PC-9 (cell line): ENCODE measurements at regions of chr1 and their contacts with region 1.

Region 1: GRCh38 chr1:32939655-32940371 is 24.8 kb downstream of the RNF19B start:
- DNase-seq: peak in 1 of 2 experiments; percentile 79
- H3K4me3 ChIP-seq: no peak overlapping the region
- H3K27ac ChIP-seq: no peak overlapping the region
- H3K4me1 ChIP-seq: peaks cover 17% of the 10 kb centered on the region
- H3K27me3 ChIP-seq: no peaks in the 10 kb centered on the region
- CTCF ChIP-seq: no peak

Region 2: DNA sequence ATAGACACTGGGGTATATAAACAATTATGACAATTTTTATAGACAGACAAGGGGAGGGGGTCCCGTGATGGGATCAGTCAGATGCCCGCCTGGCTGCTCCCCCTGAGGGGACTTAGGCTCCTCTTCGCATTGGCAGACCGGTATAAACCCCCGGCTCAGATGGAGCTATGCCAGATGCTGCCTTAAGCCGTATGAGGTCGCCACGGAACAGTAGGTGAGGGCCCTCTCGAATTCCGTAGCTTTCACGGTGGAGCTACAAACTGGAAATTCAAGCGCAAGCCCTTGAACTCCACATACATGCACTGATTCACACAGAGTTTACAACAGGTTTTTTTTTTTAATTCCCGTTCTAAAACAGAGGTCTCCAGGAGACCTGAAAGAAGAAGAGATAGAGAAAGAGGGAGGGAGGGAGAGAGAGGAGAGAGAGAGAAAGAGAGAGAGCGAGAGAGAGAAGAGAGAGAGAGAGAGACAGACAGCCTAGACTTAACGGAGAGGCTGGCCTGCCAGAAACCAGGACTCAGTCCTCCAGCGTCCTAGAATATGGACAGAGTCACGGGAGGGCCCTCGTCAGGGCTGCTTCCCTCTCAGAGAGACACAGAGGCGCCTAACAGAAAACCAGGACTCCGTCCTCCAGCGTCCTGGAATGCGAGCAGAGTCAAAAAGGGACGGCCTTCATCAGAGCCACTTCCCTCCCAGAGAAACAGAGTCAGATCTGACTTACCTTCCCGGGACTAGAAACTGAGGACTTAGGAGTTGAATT is 14.2 kb before region 1 on chr1:
- CTCF ChIA-PET with region 1: no interaction called
- POLR2A ChIA-PET with region 1: interaction called, 19 read pairs
- intact Hi-C with region 1: no loop called
- DNase-seq: no peak
- H3K4me3 ChIP-seq: no peak overlapping the region
- H3K27ac ChIP-seq: no peak overlapping the region
- H3K4me1 ChIP-seq: peaks cover 8% of the 10 kb centered on the region; the same call in 1 of the 2 replicates
- H3K27me3 ChIP-seq: no peaks in the 10 kb centered on the region
- CTCF ChIP-seq: no peak

Region 3: DNA sequence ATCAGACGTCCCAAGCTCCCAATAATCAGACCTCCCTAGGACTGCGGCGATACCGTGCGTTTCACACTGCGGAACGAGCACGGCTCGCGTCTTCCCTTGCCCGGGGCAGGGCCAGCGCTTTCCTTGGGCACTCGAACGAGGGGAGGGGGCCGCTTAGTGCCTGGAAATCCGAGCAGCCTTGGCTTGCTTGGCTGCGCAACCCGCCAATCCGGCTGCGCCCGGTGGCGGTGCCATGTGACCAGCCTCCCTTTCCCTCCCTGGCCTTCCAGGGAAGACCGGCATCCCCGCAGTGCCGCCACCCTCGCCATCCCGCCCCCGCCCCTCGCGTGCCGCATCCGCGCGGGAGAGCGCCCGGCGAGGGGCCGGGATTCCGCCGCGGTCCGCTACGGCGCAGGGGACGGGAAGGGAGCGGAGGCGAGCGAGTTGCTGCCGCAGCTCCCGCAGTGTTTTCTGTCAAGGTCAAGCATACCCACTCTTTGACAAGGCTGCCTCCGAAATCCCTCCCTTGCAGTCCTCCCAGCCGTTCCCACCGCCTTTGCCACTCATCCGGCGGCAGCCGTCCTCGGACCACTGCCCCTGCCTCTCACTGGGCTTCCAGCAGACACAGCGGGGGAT is 33.1 kb after region 1 on chr1:
- CTCF ChIA-PET with region 1: no interaction called
- POLR2A ChIA-PET with region 1: no interaction called
- intact Hi-C with region 1: no loop called
- DNase-seq: peak; percentile 48 to 67
- H3K4me3 ChIP-seq: peak overlapping the region; percentile 80
- H3K27ac ChIP-seq: peak overlapping the region; percentile 58
- H3K4me1 ChIP-seq: peaks cover 28% of the 10 kb centered on the region
- H3K27me3 ChIP-seq: no peaks in the 10 kb centered on the region
- CTCF ChIP-seq: no peak

Region 4: DNA sequence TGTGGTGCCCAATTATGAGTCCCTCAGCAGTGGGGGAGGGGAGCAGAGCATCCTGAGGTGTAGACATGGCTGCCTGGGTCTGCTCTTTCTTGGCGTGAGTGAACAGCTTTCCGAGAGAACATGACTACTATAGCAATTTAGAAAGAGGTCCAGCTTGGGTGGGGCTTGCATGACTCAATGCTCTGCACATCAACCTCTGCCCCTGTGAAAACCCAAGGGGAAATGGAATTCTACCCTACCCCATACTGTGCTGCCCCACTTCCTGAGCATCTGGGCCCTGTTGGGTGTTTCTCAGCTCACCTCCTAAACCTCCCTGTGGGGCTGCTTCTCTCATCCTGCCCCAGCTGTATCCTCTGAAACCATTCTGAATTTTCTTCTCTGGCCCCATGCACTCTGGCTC is 132.9 kb after region 1 on chr1:
- CTCF ChIA-PET with region 1: no interaction called
- POLR2A ChIA-PET with region 1: no interaction called
- intact Hi-C with region 1: no loop called
- DNase-seq: no peak
- H3K4me3 ChIP-seq: no peak overlapping the region
- H3K27ac ChIP-seq: no peak overlapping the region
- H3K4me1 ChIP-seq: peaks cover 11% of the 10 kb centered on the region
- H3K27me3 ChIP-seq: no peaks in the 10 kb centered on the region
- CTCF ChIP-seq: no peak